AG04449 (cell line): ENCODE measurements at regions of chr19 and their contacts with region 1.

Region 1: GRCh38 chr19:50368649-50369570 is 3.5 kb upstream of the NAPSA start:
- DNase-seq: peak; percentile 28
- H3K4me3 ChIP-seq: peak overlapping the region; percentile 80
- CTCF ChIP-seq: peak; percentile 79

Region 2: GRCh38 chr19:50167314-50167721 is 201.6 kb before region 1 on chr19:
- CTCF ChIA-PET with region 1: no interaction called
- POLR2A ChIA-PET with region 1: no interaction called
- DNase-seq: no peak
- H3K4me3 ChIP-seq: no peak overlapping the region
- CTCF ChIP-seq: no peak

Region 3: DNA sequence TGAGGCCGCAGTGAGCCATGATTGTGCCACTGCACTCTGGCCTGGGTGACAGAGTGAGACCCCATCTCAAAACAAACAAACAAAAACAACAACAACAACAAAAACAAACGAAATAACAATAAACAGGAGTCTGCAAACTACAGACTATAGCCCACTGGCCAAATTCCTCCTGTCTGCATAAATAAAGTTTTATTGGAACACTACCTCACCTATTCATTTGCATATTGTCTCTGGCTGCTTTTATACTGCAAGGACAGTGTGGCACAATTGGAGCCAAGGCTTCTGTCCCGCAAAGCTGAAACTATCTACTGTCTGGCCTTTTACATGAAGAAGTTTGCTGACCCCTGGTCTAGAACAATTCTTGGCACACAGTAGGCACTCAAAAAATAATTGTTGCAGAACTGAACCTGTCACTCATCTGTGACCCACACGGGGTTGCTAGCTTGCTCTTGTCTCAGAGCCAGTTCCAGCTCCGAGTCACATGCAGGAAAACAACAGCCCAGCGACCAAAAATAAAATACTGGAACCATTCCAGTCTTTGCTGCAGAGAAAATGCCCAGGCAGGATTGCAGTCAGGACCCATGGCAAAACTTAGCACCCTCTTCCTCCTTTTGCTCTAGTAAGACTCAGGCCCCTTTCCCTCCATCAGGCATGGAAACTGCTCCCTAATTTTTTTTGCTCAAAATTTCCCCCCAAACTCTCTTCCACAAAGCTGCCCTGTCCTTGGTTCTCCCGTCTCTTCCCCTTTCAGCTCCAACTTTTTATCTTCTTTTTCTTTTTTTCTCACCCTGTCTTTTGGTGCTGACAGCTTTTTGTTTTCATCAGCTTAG is 170.3 kb before region 1 on chr19:
- CTCF ChIA-PET with region 1: no interaction called
- POLR2A ChIA-PET with region 1: no interaction called
- DNase-seq: no peak
- H3K4me3 ChIP-seq: no peak overlapping the region
- CTCF ChIP-seq: no peak

Region 4: GRCh38 chr19:50409347-50409746 is 40.4 kb after region 1 on chr19:
- CTCF ChIA-PET with region 1: interaction called, 10 read pairs
- POLR2A ChIA-PET with region 1: no interaction called
- DNase-seq: no peak
- H3K4me3 ChIP-seq: no peak overlapping the region
- CTCF ChIP-seq: no peak

Region 5: GRCh38 chr19:50478901-50479736 is 110.2 kb after region 1 on chr19:
- CTCF ChIA-PET with region 1: interaction called, 25 read pairs
- POLR2A ChIA-PET with region 1: no interaction called
- DNase-seq: no peak
- H3K4me3 ChIP-seq: no peak overlapping the region
- CTCF ChIP-seq: peak; percentile 68

Region 6: GRCh38 chr19:50520822-50521465 is 152.0 kb after region 1 on chr19:
- CTCF ChIA-PET with region 1: no interaction called
- POLR2A ChIA-PET with region 1: no interaction called
- DNase-seq: no peak
- H3K4me3 ChIP-seq: no peak overlapping the region
- CTCF ChIP-seq: no peak

Region 7: GRCh38 chr19:50556282-50557008 is 187.5 kb after region 1 on chr19:
- CTCF ChIA-PET with region 1: interaction called, 13 read pairs
- POLR2A ChIA-PET with region 1: no interaction called
- DNase-seq: peak; percentile 3
- H3K4me3 ChIP-seq: peak overlapping the region; percentile 48
- CTCF ChIP-seq: peak; percentile 90